PC-9 (cell line): ENCODE measurements at regions of chrX and their contacts with region 1.

Region 1: GRCh38 chrX:74550295-74550802 is 64.1 kb downstream of the RLIM start:
- DNase-seq: peak; percentile 38 to 55
- H3K4me3 ChIP-seq: no peak overlapping the region
- H3K27ac ChIP-seq: no peak overlapping the region
- H3K4me1 ChIP-seq: no peaks in the 10 kb centered on the region
- H3K27me3 ChIP-seq: no peaks in the 10 kb centered on the region
- CTCF ChIP-seq: peak; percentile 92

Region 2: DNA sequence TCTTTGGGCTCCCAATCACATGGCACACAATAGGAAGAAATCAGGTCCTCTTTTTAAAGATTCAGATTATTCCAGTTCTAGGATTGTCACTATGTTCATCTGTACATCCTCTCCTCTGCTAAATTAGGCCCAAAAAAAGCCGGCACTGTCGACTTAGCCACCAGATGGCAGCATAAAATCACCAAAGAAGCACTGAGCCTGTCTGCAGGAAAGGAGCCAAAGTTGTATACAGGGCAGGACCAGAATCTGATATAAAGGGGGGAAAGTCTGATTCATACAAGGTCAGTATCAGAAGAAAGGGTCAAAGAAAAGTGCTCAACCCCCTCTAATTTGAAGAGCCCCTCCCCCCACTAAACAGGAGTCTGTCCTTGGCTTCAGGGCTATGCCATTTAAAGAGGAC is 694.8 kb before region 1 on chrX:
- CTCF ChIA-PET with region 1: no interaction called
- POLR2A ChIA-PET with region 1: no interaction called
- intact Hi-C with region 1: loop called (anchors 1 kb)
- DNase-seq: peak; percentile 40 to 58
- H3K4me3 ChIP-seq: no peak overlapping the region
- H3K27ac ChIP-seq: no peak overlapping the region
- H3K4me1 ChIP-seq: 0 out of 2 replicates have a peak, but pooled peaks cover 4% of the 10 kb centered on the region
- H3K27me3 ChIP-seq: no peaks in the 10 kb centered on the region
- CTCF ChIP-seq: peak; percentile 77

Region 3: DNA sequence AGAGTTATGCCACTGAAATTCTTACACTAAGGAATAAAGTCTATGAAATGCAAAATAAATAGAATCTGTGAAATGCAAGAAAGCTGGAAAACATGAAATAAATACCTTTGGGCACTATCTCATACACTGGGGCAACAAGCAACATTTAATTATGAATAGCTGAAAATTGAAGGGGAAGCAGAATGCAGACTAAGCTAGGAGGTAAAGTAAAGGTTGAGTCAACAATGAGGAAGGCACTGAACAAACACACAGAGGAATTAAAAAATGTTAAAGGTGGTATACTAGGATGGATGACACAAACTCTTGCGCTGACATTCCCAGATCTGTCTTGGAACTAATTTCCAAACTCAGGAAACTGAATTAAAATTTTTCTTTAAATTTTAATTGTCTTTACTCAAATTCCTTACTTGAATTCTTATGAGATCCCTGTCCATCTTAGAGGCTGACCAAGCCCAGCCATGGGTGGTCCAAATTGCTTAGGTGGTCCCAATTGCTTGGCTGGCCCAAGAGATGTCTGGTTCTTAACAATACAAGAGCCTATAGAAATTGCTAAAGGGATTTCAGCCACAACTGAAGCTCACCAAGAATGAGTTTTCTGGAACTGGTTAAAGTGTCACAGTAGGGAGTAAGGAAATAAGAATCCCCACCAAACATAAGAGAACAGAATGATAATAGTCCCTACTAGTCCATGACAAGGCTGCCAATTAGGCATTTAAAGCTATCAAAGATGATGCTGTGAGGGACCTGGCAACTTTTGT is 287.7 kb before region 1 on chrX:
- CTCF ChIA-PET with region 1: no interaction called
- POLR2A ChIA-PET with region 1: no interaction called
- intact Hi-C with region 1: no loop called
- DNase-seq: no peak
- H3K4me3 ChIP-seq: no peak overlapping the region
- H3K27ac ChIP-seq: no peak overlapping the region
- H3K4me1 ChIP-seq: no peaks in the 10 kb centered on the region
- H3K27me3 ChIP-seq: no peaks in the 10 kb centered on the region
- CTCF ChIP-seq: no peak